HepG2 (cell line): ENCODE measurements at regions of chr3 and their contacts with region 1.

Region 1: DNA sequence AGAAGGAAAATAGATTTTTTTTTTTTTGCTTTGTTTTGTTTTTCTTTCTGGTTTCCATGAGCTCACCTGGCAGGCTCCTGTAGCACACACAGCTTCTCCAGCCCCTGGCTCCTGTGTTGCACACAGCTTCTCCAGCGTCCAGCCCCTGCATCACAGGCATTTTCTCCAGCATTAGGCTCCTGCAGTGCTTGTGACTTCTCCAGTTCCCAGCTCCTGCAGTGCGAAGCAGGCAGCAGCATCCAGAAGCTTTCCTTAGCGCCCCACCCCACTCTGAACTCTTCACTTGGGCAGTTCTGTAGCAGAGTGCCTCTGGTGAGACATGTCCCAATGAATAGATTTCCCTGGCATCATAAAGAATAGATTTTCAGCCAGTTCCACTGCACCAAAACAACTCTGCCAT is 5.5 kb upstream of the CCDC39 start:
- DNase-seq: no peak
- ATAC-seq: no peak
- H3K4me3 ChIP-seq: no peak overlapping the region
- H3K27ac ChIP-seq: no peak overlapping the region
- H3K4me1 ChIP-seq: peaks cover 8% of the 10 kb centered on the region
- H3K27me3 ChIP-seq: 0 out of 5 replicates have a peak, but pooled peaks cover 0 to 3% of the 10 kb centered on the region in 2 experiments
- CTCF ChIP-seq: no peak
- EP300 ChIP-seq: no peak
- POLR2A ChIP-seq: no peak
- RAD21 ChIP-seq: no peak

Region 2: DNA sequence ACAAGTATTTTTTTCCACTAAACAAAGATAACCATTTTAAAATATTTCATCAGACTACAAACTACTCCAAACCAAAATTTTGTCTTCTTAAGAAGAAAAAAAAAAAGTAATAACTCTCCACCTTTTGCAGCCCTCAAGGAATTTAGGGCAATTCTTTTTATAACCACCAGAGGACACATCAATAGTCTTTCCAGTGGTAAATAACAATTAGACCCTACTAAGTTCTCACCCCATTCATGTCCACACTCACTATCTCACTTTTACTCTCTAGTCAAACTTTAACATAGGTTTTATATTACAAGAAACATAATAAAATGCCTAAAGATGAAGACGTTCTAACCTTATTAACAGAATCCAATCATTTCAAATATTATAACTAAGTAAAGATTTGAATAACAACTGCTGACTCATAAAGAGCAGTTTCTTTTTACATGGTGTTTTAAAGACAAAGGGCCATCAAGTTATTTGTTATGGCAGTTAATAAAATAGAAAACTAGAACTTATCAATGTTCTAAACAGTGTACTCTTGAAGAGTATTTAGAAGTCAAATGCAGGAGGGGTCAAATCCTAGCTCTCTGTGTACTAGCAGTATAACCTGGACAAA is 38.5 kb before region 1 on chr3:
- CTCF ChIA-PET with region 1: no interaction called
- POLR2A ChIA-PET with region 1: no interaction called
- in situ Hi-C with region 1: no loop called
- intact Hi-C with region 1: no loop called
- DNase-seq: no peak
- ATAC-seq: no peak
- H3K4me3 ChIP-seq: no peak overlapping the region
- H3K27ac ChIP-seq: no peak overlapping the region
- H3K4me1 ChIP-seq: no peaks in the 10 kb centered on the region
- H3K27me3 ChIP-seq: no peaks in the 10 kb centered on the region
- CTCF ChIP-seq: no peak
- EP300 ChIP-seq: no peak
- POLR2A ChIP-seq: no peak
- RAD21 ChIP-seq: no peak

Region 3: GRCh38 chr3:180707896-180708295 is 23.1 kb after region 1 on chr3:
- CTCF ChIA-PET with region 1: no interaction called
- POLR2A ChIA-PET with region 1: no interaction called
- in situ Hi-C with region 1: no loop called
- intact Hi-C with region 1: loop called (anchors 1 kb)
- DNase-seq: no peak
- ATAC-seq: no peak
- H3K4me3 ChIP-seq: no peak overlapping the region
- H3K27ac ChIP-seq: no peak overlapping the region
- H3K4me1 ChIP-seq: no peaks in the 10 kb centered on the region
- H3K27me3 ChIP-seq: no peaks in the 10 kb centered on the region
- CTCF ChIP-seq: no peak
- EP300 ChIP-seq: no peak
- POLR2A ChIP-seq: no peak
- RAD21 ChIP-seq: no peak

Region 4: GRCh38 chr3:180743813-180744605 is 59.2 kb after region 1 on chr3:
- CTCF ChIA-PET with region 1: no interaction called
- POLR2A ChIA-PET with region 1: no interaction called
- in situ Hi-C with region 1: no loop called
- intact Hi-C with region 1: no loop called
- DNase-seq: no peak
- ATAC-seq: no peak
- H3K4me3 ChIP-seq: no peak overlapping the region
- H3K27ac ChIP-seq: no peak overlapping the region
- H3K4me1 ChIP-seq: no peaks in the 10 kb centered on the region
- H3K27me3 ChIP-seq: peaks cover 0 to 6% of the 10 kb centered on the region in 2 experiments; a peak in 2 of 5 replicates
- CTCF ChIP-seq: no peak
- EP300 ChIP-seq: no peak
- POLR2A ChIP-seq: no peak
- RAD21 ChIP-seq: no peak

Region 5: GRCh38 chr3:180898572-180898971 is 213.8 kb after region 1 on chr3:
- CTCF ChIA-PET with region 1: no interaction called
- POLR2A ChIA-PET with region 1: no interaction called
- in situ Hi-C with region 1: no loop called
- intact Hi-C with region 1: no loop called
- DNase-seq: no peak
- ATAC-seq: no peak
- H3K4me3 ChIP-seq: no peak overlapping the region
- H3K27ac ChIP-seq: no peak overlapping the region
- H3K4me1 ChIP-seq: no peaks in the 10 kb centered on the region
- H3K27me3 ChIP-seq: no peaks in the 10 kb centered on the region
- CTCF ChIP-seq: no peak
- EP300 ChIP-seq: no peak
- POLR2A ChIP-seq: no peak
- RAD21 ChIP-seq: no peak